ENCODE measurements at regions of chr12 and their contacts with region 1.

Region 1: GRCh38 chr12:110431957-110432587 is 18.1 kb downstream of the ARPC3 start:
- DNase-seq: no peak
- H3K27ac ChIP-seq: peak overlapping the region; percentile 44
- CTCF ChIP-seq: no peak

Region 2: DNA sequence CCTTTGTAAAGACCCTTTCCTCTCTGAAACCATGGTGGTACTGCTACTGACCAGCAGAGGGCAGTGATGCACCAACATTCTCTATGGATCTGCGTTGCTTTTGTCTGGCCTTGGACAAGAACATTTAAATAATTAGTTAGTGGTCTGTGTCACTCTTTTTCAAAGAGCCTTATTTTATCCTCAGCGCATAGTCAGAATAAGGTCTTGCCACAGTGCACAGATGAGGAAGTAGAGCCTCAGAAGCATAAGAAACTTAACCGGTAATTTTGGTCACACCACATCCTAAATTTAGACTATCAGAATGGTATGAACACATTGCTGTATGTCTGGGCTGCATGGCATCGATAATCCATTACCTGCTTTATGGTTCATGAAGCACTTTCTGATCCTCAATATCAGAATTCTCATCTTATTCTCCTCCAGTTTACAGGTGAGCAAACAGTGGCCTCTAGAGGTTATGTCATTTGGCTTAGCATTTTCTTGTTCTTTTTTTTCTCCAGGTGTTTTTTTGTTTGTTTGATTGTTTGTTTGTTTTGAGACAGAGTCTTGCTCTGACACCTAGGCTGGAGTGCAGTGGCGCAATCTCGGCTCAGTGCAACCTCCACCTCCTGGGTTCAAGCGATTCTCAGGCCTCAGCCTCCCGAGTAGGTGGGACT is 331.6 kb before region 1 on chr12:
- CTCF ChIA-PET with region 1: interaction called, 15 read pairs
- POLR2A ChIA-PET with region 1: no interaction called
- DNase-seq: peak; percentile 46
- H3K27ac ChIP-seq: 0 out of 2 replicates have a peak overlapping the region, but pooled peaks have one; percentile 17
- CTCF ChIP-seq: peak; percentile 89

Region 3: GRCh38 chr12:110421701-110422100 is 10.4 kb before region 1 on chr12:
- CTCF ChIA-PET with region 1: interaction called, 11 read pairs
- POLR2A ChIA-PET with region 1: no interaction called
- DNase-seq: no peak
- H3K27ac ChIP-seq: no peak overlapping the region
- CTCF ChIP-seq: no peak

Region 4: DNA sequence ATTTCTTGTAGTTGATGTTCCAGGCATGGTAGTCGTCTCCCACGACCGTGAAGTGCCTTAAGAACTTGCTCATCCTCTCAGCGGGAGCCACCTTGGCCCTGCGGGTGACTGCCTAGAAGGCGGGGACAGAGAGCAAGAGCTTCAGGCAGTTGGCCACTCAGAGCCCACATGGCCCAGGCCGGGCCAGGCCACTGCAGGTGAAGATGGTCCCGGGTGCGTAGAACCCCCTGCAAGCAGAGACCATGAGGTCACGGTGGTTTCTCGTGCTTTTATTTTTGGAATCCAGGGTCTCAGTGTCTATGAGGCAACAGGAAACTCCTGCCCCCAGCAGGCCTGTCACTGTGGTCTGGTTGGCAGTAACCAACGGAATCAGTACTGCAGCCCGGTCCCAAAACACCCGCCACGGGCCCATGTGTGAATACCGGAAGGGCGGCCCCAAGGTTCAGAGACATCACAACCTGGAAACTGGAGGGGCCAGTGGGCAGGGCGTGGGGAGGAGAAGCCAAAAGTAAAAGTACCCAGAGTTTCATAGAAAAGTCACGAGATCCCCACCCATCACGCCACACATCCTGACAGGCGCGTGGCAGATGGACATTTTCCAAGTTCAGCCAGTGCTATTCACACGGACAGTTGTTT is 229.4 kb after region 1 on chr12:
- CTCF ChIA-PET with region 1: no interaction called
- POLR2A ChIA-PET with region 1: interaction called, 12 read pairs
- DNase-seq: no peak
- H3K27ac ChIP-seq: no peak overlapping the region
- CTCF ChIP-seq: no peak

Region 5: DNA sequence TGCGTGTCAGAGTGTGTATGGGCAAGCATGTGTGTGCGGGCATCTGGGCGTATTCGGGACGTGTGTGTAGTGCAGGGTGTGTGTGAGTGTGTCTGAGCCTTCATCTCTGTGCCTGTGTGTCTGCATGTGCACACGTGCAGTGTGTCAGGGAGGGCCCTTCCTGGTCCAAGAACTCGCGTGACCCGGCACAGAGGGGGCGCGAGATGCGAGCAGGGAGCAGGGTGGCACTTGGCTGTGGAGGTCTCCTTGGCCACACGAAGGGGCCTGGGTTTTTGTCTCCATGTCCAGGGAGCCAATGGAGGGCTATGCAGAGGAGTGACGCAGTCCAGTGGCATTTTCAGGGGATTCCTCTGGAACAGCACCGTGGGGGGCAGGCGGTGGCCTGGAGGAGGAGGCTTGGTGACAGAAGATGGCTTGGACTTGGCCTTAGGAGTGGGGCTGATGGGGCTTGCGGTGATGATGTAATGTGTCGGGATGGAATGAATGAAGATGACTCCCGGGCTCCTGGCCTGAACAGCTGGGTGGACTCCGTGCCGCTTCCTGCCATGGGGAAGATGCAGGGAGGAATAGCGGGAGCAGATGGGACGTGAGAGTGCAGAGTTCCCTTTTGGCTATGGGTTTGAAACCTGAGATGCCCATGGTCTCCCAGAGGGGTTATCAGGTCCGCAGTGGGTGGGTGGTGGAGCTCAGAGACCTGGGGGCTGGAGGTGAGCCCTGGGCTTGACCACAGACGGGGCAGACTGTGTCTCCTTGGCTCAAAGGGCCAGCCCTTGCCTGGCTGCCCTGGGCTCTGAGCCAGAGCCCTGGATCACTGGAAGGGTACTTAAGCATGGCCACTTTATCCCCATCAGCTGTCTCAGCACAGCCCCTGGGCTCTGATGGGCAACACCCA is 728.5 kb after region 1 on chr12:
- CTCF ChIA-PET with region 1: no interaction called
- POLR2A ChIA-PET with region 1: no interaction called
- DNase-seq: no peak
- H3K27ac ChIP-seq: no peak overlapping the region
- CTCF ChIP-seq: no peak

Measured in RWPE1 (cell line).